RWPE1 (cell line): ENCODE measurements at regions of chr9 and their contacts with region 1.

Region 1: GRCh38 chr9:18255158-18255629 is 218.8 kb upstream of the ADAMTSL1 start:
- DNase-seq: peak; percentile 69
- H3K27ac ChIP-seq: no peak overlapping the region
- CTCF ChIP-seq: peak; percentile 99

Region 2: DNA sequence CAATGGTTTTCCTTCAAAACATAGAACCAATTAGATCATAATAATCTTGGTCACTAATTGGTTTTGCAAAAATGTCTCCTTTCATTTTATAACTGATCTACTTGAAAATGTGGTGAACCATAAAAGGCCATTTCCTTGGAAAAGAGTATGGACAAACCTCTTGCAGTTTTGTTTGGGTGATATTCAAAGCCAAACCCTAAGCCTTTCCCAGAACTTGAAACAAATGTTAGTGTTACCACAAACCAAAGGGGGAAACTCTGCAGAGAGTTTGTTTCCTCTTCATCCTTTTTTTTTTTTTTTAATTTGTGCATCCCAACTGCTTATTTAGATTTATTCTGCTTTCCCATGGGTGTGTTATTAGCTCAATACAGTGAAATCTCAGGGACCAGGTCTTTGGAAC is 14.4 kb after region 1 on chr9:
- CTCF ChIA-PET with region 1: no interaction called
- POLR2A ChIA-PET with region 1: no interaction called
- DNase-seq: no peak
- H3K27ac ChIP-seq: no peak overlapping the region
- CTCF ChIP-seq: no peak

Region 3: DNA sequence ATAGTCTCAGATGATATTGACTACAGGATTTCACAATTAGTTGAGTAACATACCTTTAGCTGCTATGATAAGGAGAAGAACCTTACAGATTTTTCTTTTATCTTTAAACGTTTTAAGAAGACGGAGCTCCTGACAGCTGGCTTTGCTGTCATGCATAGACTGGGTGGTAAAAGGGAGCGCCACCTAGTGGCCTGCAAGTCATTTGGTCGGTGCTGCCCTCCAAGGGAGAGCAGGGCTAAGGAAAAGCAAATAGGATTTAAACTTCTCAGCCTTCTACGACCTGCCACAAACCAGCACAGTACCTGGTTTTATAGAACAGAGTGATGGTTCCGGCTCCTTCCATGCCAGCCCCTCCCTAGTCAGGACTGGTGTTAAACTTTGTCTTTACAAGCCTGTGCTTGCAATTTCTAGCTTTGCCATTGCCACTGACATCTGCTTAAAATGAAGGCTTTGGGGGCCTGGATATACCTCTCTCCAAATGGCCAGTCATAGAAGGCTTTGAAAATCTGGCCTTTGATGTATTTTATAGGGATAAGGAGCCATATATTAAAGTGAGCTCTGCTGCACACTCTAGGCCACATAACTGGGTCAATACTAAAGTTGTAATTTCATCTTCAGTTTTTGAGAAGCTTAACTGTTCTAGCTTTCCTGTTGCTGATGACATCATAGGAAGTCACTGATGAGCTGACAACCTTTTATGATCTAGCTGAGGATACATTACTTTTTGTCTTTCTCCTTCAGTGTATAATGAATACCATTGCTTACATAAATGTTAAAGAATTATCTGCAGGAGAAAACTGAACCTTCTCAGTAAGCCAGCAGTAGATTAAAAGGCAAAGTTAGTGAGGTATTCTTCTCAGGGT is 187.7 kb after region 1 on chr9:
- CTCF ChIA-PET with region 1: interaction called, 12 read pairs
- POLR2A ChIA-PET with region 1: no interaction called
- DNase-seq: peak; percentile 71
- H3K27ac ChIP-seq: no peak overlapping the region
- CTCF ChIP-seq: peak; percentile 93

Region 4: DNA sequence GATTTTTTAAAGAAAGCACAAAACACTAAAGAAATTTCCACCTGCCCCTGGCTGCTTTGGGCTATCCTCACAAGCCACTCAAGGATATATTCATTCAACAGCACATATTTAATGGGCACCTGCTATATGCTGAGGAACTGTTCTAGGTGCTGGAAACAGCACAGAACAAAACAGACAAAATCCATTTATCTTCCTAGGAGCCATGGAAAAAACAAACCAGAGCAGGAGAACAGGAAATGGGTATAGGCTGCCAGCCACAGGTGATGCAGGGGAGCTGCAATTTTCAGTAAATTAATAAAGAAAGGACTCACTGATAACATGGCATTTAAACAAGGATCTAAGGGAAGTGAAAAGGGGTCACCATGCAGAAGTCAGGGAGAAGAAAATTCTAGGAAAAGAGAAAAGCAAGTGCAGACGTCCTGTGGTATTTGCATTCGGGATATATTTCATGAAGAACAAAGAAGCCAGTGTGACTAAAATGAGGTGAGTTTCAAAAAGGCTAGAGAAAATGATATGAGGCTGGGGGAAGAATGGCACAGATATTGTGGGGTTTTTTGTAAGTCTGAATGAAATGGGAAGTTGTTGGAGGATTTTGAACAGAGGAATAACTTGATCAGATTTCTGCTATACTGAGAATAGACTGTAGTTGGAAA is 371.0 kb after region 1 on chr9:
- CTCF ChIA-PET with region 1: interaction called, 25 read pairs
- POLR2A ChIA-PET with region 1: no interaction called
- DNase-seq: peak; percentile 43
- H3K27ac ChIP-seq: no peak overlapping the region
- CTCF ChIP-seq: peak; percentile 93

Region 5: DNA sequence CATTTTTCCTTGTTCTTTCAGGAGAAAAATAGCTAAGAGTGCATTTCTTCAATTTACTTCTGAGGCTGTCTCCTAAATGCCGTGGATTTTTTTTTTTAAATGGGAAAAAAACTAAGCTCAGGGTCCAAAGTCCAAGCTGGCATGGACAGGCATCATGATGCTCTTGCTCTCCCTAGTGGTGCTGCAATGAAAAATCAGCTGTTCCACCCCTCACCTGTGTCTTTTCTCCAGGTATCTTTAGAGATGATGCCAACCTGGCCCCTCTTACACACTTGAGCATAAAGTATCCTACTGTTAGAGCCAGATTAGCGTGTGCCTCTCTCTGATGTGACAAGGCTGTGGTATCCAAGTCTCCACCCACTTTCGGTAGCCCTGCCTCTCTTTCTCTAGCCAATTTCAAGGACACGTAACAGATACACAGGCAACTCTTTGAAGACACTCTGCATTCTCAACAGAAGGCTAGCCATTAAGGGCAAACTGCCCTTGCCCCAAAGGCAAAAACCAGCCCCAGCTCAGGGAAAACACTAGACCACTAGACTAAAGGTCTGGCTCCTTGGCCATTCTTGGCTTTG is 569.0 kb after region 1 on chr9:
- CTCF ChIA-PET with region 1: interaction called, 10 read pairs
- POLR2A ChIA-PET with region 1: no interaction called
- DNase-seq: no peak
- H3K27ac ChIP-seq: no peak overlapping the region
- CTCF ChIP-seq: no peak; the same call in 1 of the 2 replicates

Region 6: DNA sequence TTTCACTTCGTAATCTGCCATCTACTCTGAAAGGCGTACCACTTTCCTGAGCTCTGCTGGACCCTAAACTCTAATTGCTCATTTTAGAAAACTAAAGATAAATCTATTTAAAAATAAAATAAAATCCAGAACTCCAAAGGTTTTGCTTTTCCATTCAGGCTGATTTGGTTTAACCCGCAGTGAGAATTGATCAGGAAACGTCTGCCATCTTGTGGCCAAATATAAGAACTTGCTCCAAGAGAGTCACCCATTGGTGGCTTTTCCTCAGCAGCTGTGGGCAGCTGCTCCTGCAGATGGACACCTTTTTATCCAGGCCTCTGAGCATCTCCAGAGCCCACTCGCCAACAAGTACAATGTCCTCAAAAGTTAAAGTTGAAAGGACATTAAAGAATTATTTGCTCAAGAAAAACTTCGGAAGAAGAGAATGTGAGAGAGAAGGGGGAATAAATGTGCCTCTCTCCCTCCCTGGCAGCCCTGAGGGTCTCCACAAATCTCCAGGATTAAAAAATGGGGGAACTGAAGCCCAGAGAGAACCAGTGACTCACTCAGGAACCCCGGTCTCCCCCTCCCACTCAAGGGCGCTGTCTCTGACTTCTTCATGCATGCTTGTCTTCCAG is 773.7 kb after region 1 on chr9:
- CTCF ChIA-PET with region 1: interaction called, 22 read pairs
- POLR2A ChIA-PET with region 1: no interaction called
- DNase-seq: peak; percentile 84
- H3K27ac ChIP-seq: no peak overlapping the region
- CTCF ChIP-seq: peak; percentile 90